Caco-2 (cell line): ENCODE measurements at regions of chr5 and their contacts with region 1.

Region 1: GRCh38 chr5:177454397-177455035 is 7.9 kb downstream of the PRR7 start:
- DNase-seq: peak; percentile 90 to 97
- H3K4me3 ChIP-seq: peak overlapping the region; percentile 92
- H3K4me3 Mint-ChIP-seq: peak overlapping the region; percentile 77
- H3K27ac Mint-ChIP-seq: peak overlapping the region; percentile 87
- H3K4me1 ChIP-seq: peaks cover 7% of the 10 kb centered on the region; the same call in 1 of the 2 replicates
- H3K4me1 Mint-ChIP-seq: peaks cover 7% of the 10 kb centered on the region
- H3K27me3 ChIP-seq: no peaks in the 10 kb centered on the region
- H3K27me3 Mint-ChIP-seq: no peaks in the 10 kb centered on the region
- CTCF ChIP-seq: peak; percentile 62 to 95

Region 2: DNA sequence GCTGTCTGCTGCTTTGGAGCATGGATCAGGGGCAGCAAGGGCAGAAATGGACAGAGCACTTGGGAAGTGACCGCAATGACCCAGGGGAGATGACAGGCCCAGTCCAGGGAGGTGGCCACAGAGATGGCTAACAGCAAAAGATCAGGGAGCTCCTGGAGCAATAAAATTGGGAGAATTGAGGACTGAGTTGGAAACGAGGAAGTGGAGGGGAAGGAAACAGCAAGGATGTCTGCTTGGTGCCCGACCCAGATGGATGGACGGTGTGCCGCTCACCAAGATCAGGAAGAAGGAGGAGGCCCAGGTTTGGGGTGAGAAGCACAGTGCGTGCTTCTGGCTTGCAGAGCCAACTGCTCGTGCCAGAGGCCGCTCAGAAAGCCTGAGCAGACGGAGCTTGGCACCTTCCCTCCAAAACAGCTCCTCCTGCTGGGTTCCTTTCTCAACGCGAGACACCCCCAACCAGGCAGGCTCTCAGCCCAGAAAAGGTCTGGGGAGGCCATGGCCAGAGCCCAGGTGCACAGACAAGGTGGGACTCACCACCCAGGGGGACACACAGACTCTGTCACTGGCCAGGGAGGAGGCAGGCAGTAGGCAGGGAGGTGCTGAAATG is 72.0 kb before region 1 on chr5:
- CTCF ChIA-PET with region 1: interaction called, 16 read pairs
- POLR2A ChIA-PET with region 1: no interaction called
- intact Hi-C with region 1: no loop called
- DNase-seq: peak in 1 of 2 experiments; percentile 53
- H3K4me3 ChIP-seq: no peak overlapping the region
- H3K4me3 Mint-ChIP-seq: no peak overlapping the region
- H3K27ac Mint-ChIP-seq: peak overlapping the region; percentile 36
- H3K4me1 ChIP-seq: peaks cover 30% of the 10 kb centered on the region
- H3K4me1 Mint-ChIP-seq: peaks cover 30% of the 10 kb centered on the region
- H3K27me3 ChIP-seq: no peaks in the 10 kb centered on the region
- H3K27me3 Mint-ChIP-seq: no peaks in the 10 kb centered on the region
- CTCF ChIP-seq: peak in 1 of 2 experiments; percentile 36

Region 3: DNA sequence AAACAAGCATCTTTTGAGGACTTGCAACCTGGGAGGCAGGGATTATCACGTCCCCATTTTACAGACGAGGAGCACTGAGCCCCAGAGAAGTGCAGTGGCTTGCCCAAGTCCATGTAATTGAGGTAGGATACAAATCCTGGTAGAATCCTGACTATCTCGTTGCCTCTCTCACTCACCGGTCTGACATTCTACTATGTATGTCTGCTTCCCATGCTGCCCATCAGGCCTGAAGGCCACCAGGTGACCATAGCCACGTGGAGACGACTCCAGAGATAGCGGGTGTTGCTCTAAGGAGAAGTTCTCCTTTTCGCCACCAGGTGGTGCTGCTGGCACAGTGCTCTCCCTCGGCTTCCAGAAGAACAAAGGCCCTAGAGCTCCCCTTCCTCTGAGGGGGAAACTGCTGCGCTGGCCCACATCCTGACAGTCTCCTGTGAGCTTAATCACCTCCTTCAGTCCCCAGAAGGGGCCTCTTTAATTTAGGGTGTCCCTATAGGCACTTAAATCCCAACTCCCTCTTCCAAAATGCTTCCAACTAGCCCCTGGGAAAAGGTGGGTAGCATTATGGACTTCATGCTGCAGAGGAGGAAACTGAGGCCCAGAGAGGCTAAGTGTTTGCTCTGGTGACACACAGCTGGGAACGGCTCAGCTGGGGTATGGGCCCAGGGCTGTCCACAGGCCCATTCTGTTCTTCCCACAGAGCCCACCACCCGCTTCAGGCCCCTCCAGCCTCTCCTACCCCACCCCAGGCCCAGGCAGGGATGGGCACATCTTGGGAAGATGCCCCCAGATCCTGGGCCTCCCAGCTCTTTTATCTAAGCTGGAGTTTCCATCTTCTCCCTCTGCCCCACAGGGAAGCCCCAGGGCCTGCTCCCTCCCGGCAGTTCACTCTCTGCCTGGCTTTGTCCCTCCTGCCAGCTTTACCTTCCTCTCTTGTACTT is 63.9 kb before region 1 on chr5:
- CTCF ChIA-PET with region 1: interaction called, 27 read pairs
- POLR2A ChIA-PET with region 1: no interaction called
- intact Hi-C with region 1: loop called (anchors 1 kb)
- DNase-seq: peak; percentile 89 to 92
- H3K4me3 ChIP-seq: no peak overlapping the region
- H3K4me3 Mint-ChIP-seq: peak overlapping the region; percentile 43
- H3K27ac Mint-ChIP-seq: peak overlapping the region; percentile 53
- H3K4me1 ChIP-seq: peaks cover 22% of the 10 kb centered on the region
- H3K4me1 Mint-ChIP-seq: peaks cover 16% of the 10 kb centered on the region
- H3K27me3 ChIP-seq: no peaks in the 10 kb centered on the region
- H3K27me3 Mint-ChIP-seq: peaks cover 3% of the 10 kb centered on the region
- CTCF ChIP-seq: peak; percentile 92 to 98

Region 4: DNA sequence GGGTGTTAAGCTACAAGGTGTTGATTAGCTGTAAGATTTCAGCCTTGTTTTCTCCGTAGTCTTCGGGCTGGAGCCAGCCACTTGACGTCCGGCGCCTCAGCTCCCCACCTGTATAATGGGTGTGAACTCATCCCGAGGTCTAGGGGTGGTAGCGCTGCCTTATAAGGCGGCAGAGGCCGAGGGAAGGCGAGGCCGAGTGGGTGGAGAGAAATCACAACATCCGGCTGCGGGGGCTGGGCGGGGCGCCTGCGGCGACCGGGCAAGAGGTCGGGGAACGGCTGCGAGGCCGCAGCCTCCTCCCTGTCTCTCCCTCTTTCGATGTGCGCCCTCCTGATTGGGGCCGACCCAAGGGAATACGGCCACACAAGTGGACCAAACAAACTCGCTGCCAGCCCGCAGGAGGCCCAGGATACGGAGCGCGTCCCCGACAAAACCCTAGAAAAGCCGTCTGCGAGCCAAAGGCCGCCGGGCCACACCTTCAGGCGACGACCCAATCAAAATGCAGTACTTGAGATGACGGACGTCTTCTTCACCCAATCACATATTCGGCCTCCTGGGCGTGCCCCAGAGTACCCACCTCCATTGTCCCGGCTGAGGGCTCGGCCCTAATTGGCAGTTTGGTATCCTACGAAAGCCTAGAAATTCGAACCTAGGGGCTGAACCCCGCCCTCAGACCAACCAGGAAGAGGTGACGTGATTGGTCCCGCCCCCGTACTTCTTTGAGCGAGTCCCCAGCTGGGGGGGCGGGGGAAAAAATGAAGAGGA is 28.5 kb before region 1 on chr5:
- CTCF ChIA-PET with region 1: interaction called, 20 read pairs
- POLR2A ChIA-PET with region 1: interaction called, 21 read pairs
- intact Hi-C with region 1: loop called (anchors 1 kb)
- DNase-seq: peak; percentile 100
- H3K4me3 ChIP-seq: peak overlapping the region; percentile 59
- H3K4me3 Mint-ChIP-seq: peak overlapping the region; percentile 92
- H3K27ac Mint-ChIP-seq: peak overlapping the region; percentile 99
- H3K4me1 ChIP-seq: peaks cover 15% of the 10 kb centered on the region
- H3K4me1 Mint-ChIP-seq: peaks cover 12% of the 10 kb centered on the region
- H3K27me3 ChIP-seq: no peaks in the 10 kb centered on the region
- H3K27me3 Mint-ChIP-seq: no peaks in the 10 kb centered on the region
- CTCF ChIP-seq: no peak

Region 5: DNA sequence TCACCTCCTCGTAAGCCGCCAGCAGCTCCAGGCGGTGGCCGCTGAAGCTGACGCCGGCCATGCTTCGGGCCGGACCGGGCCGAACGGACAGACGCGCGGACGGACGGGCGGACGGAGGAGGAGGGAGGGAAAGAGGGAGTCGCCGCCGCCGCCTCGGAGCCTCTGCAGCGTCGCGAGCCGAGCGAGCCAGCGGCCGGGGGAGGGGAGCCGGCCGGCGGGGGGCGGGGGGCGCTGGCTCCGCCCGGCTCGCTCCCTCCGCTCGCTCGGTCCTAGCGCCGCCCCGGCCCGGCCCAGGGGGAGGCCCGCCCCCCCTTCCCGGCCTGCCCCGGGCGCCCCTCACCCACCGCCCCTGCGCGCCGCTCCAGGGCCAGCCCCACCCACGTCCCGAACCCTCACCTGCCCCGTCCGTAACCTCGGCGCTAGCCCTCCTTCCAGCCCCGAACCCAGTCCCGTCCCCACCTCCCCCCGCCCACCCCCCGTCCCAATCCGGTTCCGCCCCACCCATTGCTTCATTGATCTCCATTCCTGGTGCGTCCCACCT is 19.0 kb after region 1 on chr5 and contains the start of gene DBN1:
- CTCF ChIA-PET with region 1: interaction called, 19 read pairs
- POLR2A ChIA-PET with region 1: interaction called, 6 read pairs
- intact Hi-C with region 1: loop called (anchors 2 kb)
- DNase-seq: peak in 1 of 2 experiments; percentile 55
- H3K4me3 ChIP-seq: peak within 1 kb of the TSS; percentile 86
- H3K4me3 Mint-ChIP-seq: peak within 1 kb of the TSS; percentile 74
- H3K27ac Mint-ChIP-seq: peak within 1 kb of the TSS; percentile 11
- H3K4me1 ChIP-seq: peaks cover 40% of the 10 kb centered on the region
- H3K4me1 Mint-ChIP-seq: peaks cover 37% of the 10 kb centered on the region
- H3K27me3 ChIP-seq: no peaks in the 10 kb centered on the region
- H3K27me3 Mint-ChIP-seq: no peaks in the 10 kb centered on the region
- CTCF ChIP-seq: no peak
- total RNA-seq, gene DBN1: 139 and 144 TPM in 2 replicates

Region 6: GRCh38 chr5:177497292-177498033 is 42.9 kb after region 1 on chr5 and contains the start of gene PDLIM7:
- CTCF ChIA-PET with region 1: interaction called, 29 read pairs
- POLR2A ChIA-PET with region 1: interaction called, 7 read pairs
- intact Hi-C with region 1: loop called (anchors 1 kb)
- DNase-seq: peak; percentile 97 to 98
- H3K4me3 ChIP-seq: peak within 1 kb of the TSS; percentile 85
- H3K4me3 Mint-ChIP-seq: peak within 1 kb of the TSS; percentile 89
- H3K27ac Mint-ChIP-seq: peak within 1 kb of the TSS; percentile 63
- H3K4me1 ChIP-seq: peaks cover 25% of the 10 kb centered on the region
- H3K4me1 Mint-ChIP-seq: peaks cover 27% of the 10 kb centered on the region
- H3K27me3 ChIP-seq: no peaks in the 10 kb centered on the region
- H3K27me3 Mint-ChIP-seq: peaks cover 11% of the 10 kb centered on the region
- CTCF ChIP-seq: peak in 1 of 2 experiments; percentile 26
- total RNA-seq, gene PDLIM7: 49.1 and 56.8 TPM in 2 replicates